ENCODE measurements at regions of chr4 and their contacts with region 1.

Region 1: DNA sequence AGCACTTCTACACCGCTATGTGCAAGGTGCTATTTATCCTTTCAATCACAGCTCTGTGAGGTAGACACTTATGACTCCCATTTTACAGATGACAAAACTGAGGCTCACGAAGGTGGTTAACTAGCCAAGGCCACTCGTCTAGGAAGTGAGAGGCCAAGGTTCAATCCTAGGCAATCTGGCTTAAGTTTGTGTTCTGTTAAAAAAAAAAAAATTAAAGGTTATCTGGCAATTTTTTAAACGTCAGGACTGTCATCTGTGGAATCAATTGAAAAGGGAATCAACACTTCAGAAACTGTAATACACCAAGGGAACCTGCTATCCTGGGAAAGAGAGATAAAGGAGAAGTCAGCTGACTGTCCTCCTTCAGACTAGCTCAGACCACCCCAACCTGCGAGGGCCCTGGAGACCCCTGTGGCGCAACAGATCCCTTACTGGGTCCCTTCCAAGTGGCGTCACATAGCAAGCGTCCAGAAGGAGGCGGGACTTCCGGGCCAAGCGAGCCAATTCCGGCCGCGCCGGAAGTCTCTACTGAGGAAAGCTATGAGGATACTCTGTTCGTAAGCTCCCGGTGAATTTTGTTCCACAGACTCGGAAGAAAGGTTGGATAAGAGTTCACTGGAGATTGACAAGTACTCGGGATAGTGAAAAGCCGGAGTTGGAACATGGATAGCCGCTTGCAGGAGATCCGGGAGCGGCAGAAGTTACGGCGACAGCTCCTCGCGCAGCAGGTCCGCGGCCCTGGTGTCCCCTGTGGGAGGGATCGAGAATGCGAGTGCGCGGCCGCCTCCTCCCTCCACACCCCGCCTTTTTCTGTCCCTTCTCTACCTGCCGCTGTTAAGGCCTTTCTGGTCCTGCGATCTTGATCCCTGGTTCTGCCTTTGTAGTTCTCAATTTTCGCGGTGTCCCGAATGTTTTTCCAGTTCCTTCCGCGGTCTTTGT is at the start of gene METTL14:
- DNase-seq: peak; percentile 66 to 78
- H3K4me3 ChIP-seq: peak within 1 kb of the TSS; percentile 79
- H3K27ac ChIP-seq: peak within 1 kb of the TSS; percentile 72
- H3K4me1 ChIP-seq: peaks cover 12% of the 10 kb centered on the region; the same call in 1 of the 2 replicates
- H3K27me3 ChIP-seq: no peaks in the 10 kb centered on the region
- CTCF ChIP-seq: no peak
- total RNA-seq, gene METTL14: 24.0 and 26.3 TPM in 2 replicates

Region 2: DNA sequence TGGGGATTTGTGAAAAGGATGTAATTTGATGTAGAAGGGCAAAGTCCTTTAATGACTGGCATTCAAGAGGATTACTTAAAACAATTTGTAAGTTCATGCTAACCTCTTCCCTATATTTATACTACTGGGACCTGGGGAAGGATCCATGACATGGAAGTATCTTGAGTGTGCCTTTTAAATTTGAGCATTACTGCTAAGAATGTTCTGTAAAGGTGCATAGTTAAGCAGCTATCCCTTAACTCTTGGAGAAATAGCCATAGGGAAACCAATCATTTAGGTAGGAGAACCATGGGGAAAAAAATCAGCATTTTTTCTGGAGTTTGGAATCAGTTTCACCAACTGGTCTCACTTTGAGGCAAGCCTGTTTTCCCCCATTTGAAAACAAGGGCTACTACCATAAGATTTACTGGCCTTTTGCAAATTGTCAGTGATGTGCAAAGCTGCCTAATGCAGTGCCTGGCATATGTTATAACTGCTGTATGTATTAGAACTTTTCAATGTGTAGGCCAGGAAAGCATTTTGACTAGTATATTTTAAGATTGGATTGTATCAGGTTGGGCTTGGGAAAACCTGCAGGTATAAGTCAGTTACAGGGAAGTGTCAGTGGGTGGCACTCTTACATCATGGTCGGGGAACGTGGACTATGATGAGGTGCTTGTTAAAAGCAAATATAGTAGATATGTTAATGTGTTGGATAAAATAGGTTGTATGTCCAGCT is 404.5 kb before region 1 on chr4:
- CTCF ChIA-PET with region 1: no interaction called
- POLR2A ChIA-PET with region 1: no interaction called
- intact Hi-C with region 1: loop called (anchors 10 kb)
- DNase-seq: peak; percentile 35 to 54
- H3K4me3 ChIP-seq: peak overlapping the region; percentile 87
- H3K27ac ChIP-seq: peak overlapping the region; percentile 88
- H3K4me1 ChIP-seq: peaks cover 23% of the 10 kb centered on the region
- H3K27me3 ChIP-seq: no peaks in the 10 kb centered on the region
- CTCF ChIP-seq: peak; percentile 54

Region 3: GRCh38 chr4:118338981-118339765 is 346.0 kb before region 1 on chr4:
- CTCF ChIA-PET with region 1: no interaction called
- POLR2A ChIA-PET with region 1: interaction called, 16 read pairs
- intact Hi-C with region 1: no loop called
- DNase-seq: no peak
- H3K4me3 ChIP-seq: no peak overlapping the region
- H3K27ac ChIP-seq: no peak overlapping the region
- H3K4me1 ChIP-seq: no peaks in the 10 kb centered on the region
- H3K27me3 ChIP-seq: no peaks in the 10 kb centered on the region
- CTCF ChIP-seq: no peak

Region 4: GRCh38 chr4:118586357-118586790 is 98.8 kb before region 1 on chr4:
- CTCF ChIA-PET with region 1: interaction called, 17 read pairs
- POLR2A ChIA-PET with region 1: no interaction called
- intact Hi-C with region 1: no loop called
- DNase-seq: no peak
- H3K4me3 ChIP-seq: no peak overlapping the region
- H3K27ac ChIP-seq: no peak overlapping the region
- H3K4me1 ChIP-seq: peaks cover 11% of the 10 kb centered on the region; the same call in 1 of the 2 replicates
- H3K27me3 ChIP-seq: no peaks in the 10 kb centered on the region; the same call in 1 of the 2 replicates
- CTCF ChIP-seq: no peak

Measured in PC-9 (cell line).